Endothelial cell of umbilical vein (primary cell): ENCODE measurements at regions of chr1 and their contacts with region 1.

Region 1: GRCh38 chr1:114346480-114347029 is 164.4 kb downstream of the TRIM33 start:
- DNase-seq: peak; percentile 94
- H3K4me3 ChIP-seq: peak overlapping the region; percentile 15 to 63 (median 35)
- H3K27ac ChIP-seq: no peak overlapping the region
- H3K4me1 ChIP-seq: peaks cover 7% of the 10 kb centered on the region
- H3K27me3 ChIP-seq: peaks cover 0 to 2% of the 10 kb centered on the region in 2 experiments
- CTCF ChIP-seq: peak; percentile 100
- POLR2A ChIP-seq: no peak

Region 2: GRCh38 chr1:114369927-114370326 is 23.4 kb after region 1 on chr1:
- CTCF ChIA-PET with region 1: no interaction called
- POLR2A ChIA-PET with region 1: no interaction called
- dilution Hi-C with region 1: no loop called
- intact Hi-C with region 1: no loop called
- DNase-seq: no peak
- H3K4me3 ChIP-seq: no peak overlapping the region
- H3K27ac ChIP-seq: no peak overlapping the region
- H3K4me1 ChIP-seq: no peaks in the 10 kb centered on the region
- H3K27me3 ChIP-seq: no peaks in the 10 kb centered on the region
- CTCF ChIP-seq: no peak
- POLR2A ChIP-seq: no peak

Region 3: GRCh38 chr1:114428083-114428749 is 81.7 kb after region 1 on chr1:
- CTCF ChIA-PET with region 1: interaction called, 17 read pairs
- POLR2A ChIA-PET with region 1: no interaction called
- dilution Hi-C with region 1: no loop called
- intact Hi-C with region 1: loop called (anchors 1 kb)
- DNase-seq: peak; percentile 43
- H3K4me3 ChIP-seq: no peak overlapping the region
- H3K27ac ChIP-seq: no peak overlapping the region
- H3K4me1 ChIP-seq: no peaks in the 10 kb centered on the region
- H3K27me3 ChIP-seq: no peaks in the 10 kb centered on the region
- CTCF ChIP-seq: peak in 1 of 2 donors; percentile 11
- POLR2A ChIP-seq: no peak

Region 4: GRCh38 chr1:114558544-114558943 is 212.0 kb after region 1 on chr1:
- CTCF ChIA-PET with region 1: interaction called, 3 read pairs
- POLR2A ChIA-PET with region 1: no interaction called
- dilution Hi-C with region 1: no loop called
- intact Hi-C with region 1: loop called (anchors 5 kb)
- DNase-seq: no peak
- H3K4me3 ChIP-seq: no peak overlapping the region
- H3K27ac ChIP-seq: no peak overlapping the region
- H3K4me1 ChIP-seq: no peaks in the 10 kb centered on the region
- H3K27me3 ChIP-seq: no peaks in the 10 kb centered on the region
- CTCF ChIP-seq: no peak
- POLR2A ChIP-seq: no peak

Region 5: GRCh38 chr1:114648502-114648901 is 301.9 kb after region 1 on chr1:
- CTCF ChIA-PET with region 1: interaction called, 4 read pairs
- POLR2A ChIA-PET with region 1: no interaction called
- dilution Hi-C with region 1: no loop called
- intact Hi-C with region 1: loop called (anchors 1 kb)
- DNase-seq: no peak
- H3K4me3 ChIP-seq: no peak overlapping the region
- H3K27ac ChIP-seq: no peak overlapping the region
- H3K4me1 ChIP-seq: no peaks in the 10 kb centered on the region
- H3K27me3 ChIP-seq: peaks cover 0 to 1% of the 10 kb centered on the region in 2 experiments
- CTCF ChIP-seq: no peak
- POLR2A ChIP-seq: no peak

Region 6: GRCh38 chr1:114716304-114717170 is 370.0 kb after region 1 on chr1 and contains the start of gene NRAS:
- CTCF ChIA-PET with region 1: interaction called, 7 read pairs
- POLR2A ChIA-PET with region 1: no interaction called
- dilution Hi-C with region 1: no loop called
- intact Hi-C with region 1: loop called (anchors 1 kb)
- DNase-seq: peak; percentile 91
- H3K4me3 ChIP-seq: peak within 1 kb of the TSS; percentile 94 to 100 (median 100)
- H3K27ac ChIP-seq: peak within 1 kb of the TSS; percentile 100
- H3K4me1 ChIP-seq: peaks cover 24% of the 10 kb centered on the region
- H3K27me3 ChIP-seq: no peaks in the 10 kb centered on the region
- CTCF ChIP-seq: no peak
- POLR2A ChIP-seq: peak; percentile 85
- total RNA-seq, gene NRAS: 76.5 and 78.7 TPM in 2 replicates

Region 7: GRCh38 chr1:115041654-115042053 is 695.1 kb after region 1 on chr1:
- CTCF ChIA-PET with region 1: interaction called, 3 read pairs
- POLR2A ChIA-PET with region 1: no interaction called
- dilution Hi-C with region 1: no loop called
- intact Hi-C with region 1: loop called (anchors 10 kb)
- DNase-seq: no peak
- H3K4me3 ChIP-seq: no peak overlapping the region
- H3K27ac ChIP-seq: no peak overlapping the region
- H3K4me1 ChIP-seq: no peaks in the 10 kb centered on the region
- H3K27me3 ChIP-seq: peaks cover 4 to 6% of the 10 kb centered on the region in 2 experiments
- CTCF ChIP-seq: peak in 1 of 2 donors; percentile 3
- POLR2A ChIP-seq: no peak